Heart left ventricle (tissue), 16 donors: ENCODE measurements at regions of chr9 and their contacts with region 1.

Region 1: GRCh38 chr9:13324988-13325387 is 45.5 kb upstream of the MPDZ start:
- DNase-seq: no peak
- ATAC-seq: peak in 2 of 4 donors; percentile 41 to 64
- H3K4me3 ChIP-seq: no peak overlapping the region
- H3K27ac ChIP-seq: no peak overlapping the region
- H3K4me1 ChIP-seq: peaks cover 0 to 11% (median 0%) of the 10 kb centered on the region in 12 donors
- H3K27me3 ChIP-seq: no peaks in the 10 kb centered on the region
- CTCF ChIP-seq: no peak
- POLR2A ChIP-seq: no peak

Region 2: DNA sequence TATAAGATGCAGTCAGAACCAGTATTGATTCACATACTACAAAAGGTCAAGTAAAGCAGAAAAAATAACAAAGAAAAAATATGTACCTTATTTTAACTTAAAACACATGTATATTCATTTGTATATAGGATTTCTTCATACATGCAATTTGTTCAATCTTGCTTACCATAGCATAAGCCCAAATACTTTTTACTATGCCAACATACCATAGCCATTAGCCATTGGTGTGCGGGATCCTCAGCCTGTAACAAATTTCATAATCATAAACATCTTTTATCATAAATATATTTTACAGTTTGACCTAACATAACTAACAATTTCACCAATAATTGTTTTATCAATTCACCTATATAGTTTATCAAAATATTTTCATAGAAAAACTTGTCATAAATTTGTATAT is 96.6 kb before region 1 on chr9:
- intact Hi-C with region 1: loop called in 1 of 10 experiments (anchors 10 kb)
- DNase-seq: no peak
- ATAC-seq: no peak
- H3K4me3 ChIP-seq: no peak overlapping the region
- H3K27ac ChIP-seq: no peak overlapping the region
- H3K4me1 ChIP-seq: no peaks in the 10 kb centered on the region
- H3K27me3 ChIP-seq: no peaks in the 10 kb centered on the region
- CTCF ChIP-seq: no peak
- POLR2A ChIP-seq: no peak

Region 3: DNA sequence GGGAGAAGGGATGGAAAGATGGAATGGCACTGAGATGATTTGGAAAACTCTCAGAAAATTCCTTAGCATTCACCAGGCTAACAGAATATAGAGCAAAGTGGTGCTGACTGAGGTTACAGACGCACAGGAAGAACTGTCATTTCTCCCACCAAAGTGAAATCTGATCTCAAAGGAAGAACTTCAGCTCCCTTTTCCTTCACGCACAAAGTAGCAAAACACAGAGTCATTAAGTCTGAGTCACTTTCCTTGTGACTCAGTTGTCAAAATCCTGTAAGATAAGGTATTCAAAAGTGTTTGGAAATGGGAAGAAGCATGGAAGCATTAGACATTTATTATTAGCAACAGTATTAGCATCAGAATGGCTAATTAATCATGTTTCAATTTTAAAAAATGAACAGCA is 57.2 kb before region 1 on chr9:
- intact Hi-C with region 1: loop called in 1 of 10 experiments (anchors 10 kb)
- DNase-seq: no peak
- ATAC-seq: peak in 3 of 4 donors; percentile 46 to 87 (median 69)
- H3K4me3 ChIP-seq: no peak overlapping the region
- H3K27ac ChIP-seq: peak overlapping the region in 9 of 12 donors; percentile 8 to 63 (median 29)
- H3K4me1 ChIP-seq: peaks cover 4 to 67% (median 49%) of the 10 kb centered on the region in 12 donors
- H3K27me3 ChIP-seq: no peaks in the 10 kb centered on the region
- CTCF ChIP-seq: no peak
- POLR2A ChIP-seq: no peak